Kidney (tissue), 22 donors: ENCODE measurements at regions of chr1 and their contacts with region 1.

Region 1: GRCh38 chr1:85230305-85230980 is 29.0 kb downstream of the C1orf52 start:
- DNase-seq: no peak
- H3K4me3 ChIP-seq: no peak overlapping the region
- H3K27ac ChIP-seq: no peak overlapping the region
- H3K4me1 ChIP-seq: peaks cover 0 to 6% (median under 1%) of the 10 kb centered on the region in 3 donors
- H3K27me3 ChIP-seq: no peaks in the 10 kb centered on the region
- CTCF ChIP-seq: peak; percentile 19

Region 2: DNA sequence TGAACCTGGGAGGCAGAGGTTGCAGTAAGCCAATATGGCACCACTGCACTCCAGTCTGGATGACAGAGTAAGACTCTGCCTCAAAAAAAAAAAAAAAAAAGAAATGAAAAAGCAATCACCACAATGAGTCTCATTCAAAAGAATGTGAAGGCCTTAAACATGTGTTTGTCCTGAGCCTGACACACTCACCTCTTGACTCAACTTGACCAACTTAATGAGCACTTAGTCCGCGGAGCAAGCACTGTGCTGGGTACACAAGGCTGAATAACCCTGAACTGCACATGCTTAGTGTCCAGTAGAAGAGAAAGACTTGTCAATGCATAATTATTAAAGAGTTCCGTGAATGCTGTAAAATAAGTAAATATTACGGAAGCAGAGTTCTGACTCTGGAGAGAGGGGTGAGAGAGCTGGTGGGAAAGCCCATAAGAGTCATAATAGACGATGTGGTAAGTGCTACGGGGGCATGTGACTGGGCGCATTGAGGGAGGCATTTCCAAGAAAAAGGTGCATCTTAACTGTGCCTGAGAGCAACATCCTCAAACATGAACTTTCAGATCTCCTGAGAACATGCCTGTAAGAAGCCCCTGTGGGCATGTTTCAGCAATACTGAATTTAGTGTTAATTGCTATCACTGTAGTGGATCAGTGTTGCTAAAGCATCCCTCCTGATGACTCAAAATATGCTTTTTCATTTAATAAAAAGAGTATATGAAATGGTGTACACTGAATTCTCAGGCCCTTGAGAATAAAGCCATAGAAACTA is 260.8 kb before region 1 on chr1:
- intact Hi-C with region 1: loop called (anchors 10 kb)
- DNase-seq: no peak
- H3K4me3 ChIP-seq: no peak overlapping the region
- H3K27ac ChIP-seq: no peak overlapping the region
- H3K4me1 ChIP-seq: peaks cover 0 to 6% (median 0%) of the 10 kb centered on the region in 3 donors
- H3K27me3 ChIP-seq: no peaks in the 10 kb centered on the region
- CTCF ChIP-seq: no peak

Region 3: GRCh38 chr1:85116856-85117255 is 113.6 kb before region 1 on chr1:
- intact Hi-C with region 1: loop called (anchors 10 kb)
- DNase-seq: no peak
- H3K4me3 ChIP-seq: no peak overlapping the region
- H3K27ac ChIP-seq: no peak overlapping the region
- H3K4me1 ChIP-seq: no peaks in the 10 kb centered on the region
- H3K27me3 ChIP-seq: no peaks in the 10 kb centered on the region
- CTCF ChIP-seq: no peak

Region 4: DNA sequence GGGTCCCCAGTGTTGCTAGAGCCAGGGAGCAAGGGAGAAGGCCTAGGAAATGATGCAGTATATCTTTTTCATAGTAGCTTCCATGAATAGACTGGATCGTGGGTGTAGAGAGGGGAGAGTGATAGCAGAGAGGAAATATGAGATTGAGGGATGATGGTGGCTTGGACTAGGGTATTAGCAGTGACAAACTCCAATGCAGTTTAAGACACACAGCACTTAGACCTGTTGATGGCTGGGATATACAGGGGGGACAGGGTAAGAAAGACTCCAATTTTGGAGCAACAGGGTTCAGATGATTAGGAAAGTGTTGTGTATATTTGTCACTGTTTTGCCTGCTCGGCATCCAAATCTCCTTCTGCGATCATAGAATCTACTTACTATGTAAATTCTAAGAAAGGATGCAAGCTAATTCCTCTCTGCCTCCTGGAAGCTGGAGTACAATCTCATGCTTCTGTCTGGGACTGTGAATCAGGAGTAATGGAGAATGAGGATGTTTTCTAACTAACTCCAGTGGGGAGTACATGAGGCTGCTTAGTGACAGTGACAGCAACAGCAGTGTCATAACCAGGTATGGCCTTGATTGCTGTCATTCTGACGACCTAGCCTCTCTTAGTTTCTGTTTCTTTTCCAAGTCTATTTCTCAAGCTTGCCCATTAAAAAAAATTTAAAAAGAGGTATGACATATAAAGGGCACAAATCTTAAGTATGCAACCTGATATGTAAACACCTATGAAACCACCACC is 77.1 kb before region 1 on chr1:
- intact Hi-C with region 1: no loop called
- DNase-seq: no peak
- H3K4me3 ChIP-seq: no peak overlapping the region
- H3K27ac ChIP-seq: no peak overlapping the region
- H3K4me1 ChIP-seq: no peaks in the 10 kb centered on the region
- H3K27me3 ChIP-seq: no peaks in the 10 kb centered on the region
- CTCF ChIP-seq: no peak